ENCODE measurements at regions of chr4 and their contacts with region 1.

Region 1: DNA sequence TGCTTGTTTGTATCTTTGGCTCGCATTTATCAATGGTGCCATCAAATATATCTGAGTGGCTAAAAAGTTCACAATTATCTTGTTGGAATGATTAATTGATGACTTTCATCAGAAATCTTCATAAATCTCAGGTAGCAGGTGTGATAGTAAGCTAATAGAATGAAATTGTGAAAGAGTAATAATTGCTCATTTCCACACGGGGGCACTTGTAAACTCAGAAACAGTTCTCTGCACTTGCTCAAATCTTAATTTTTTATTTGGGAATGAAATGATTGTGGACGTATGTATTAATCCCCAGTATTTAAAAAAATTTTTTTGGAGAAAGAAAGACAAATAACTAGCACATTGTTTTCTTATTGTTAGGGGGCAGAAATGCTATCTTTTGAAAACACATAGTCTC is 132.8 kb downstream of the DTHD1 start:
- DNase-seq: peak in 1 of 9 donors; percentile 4
- ATAC-seq: no peak
- H3K4me3 ChIP-seq: no peak overlapping the region
- H3K4me3 Mint-ChIP-seq: no peak overlapping the region
- H3K27ac ChIP-seq: no peak overlapping the region
- H3K27ac Mint-ChIP-seq: no peak overlapping the region
- H3K4me1 ChIP-seq: no peaks in the 10 kb centered on the region
- H3K4me1 Mint-ChIP-seq: no peaks in the 10 kb centered on the region
- H3K27me3 ChIP-seq: peaks cover 0 to 4% of the 10 kb centered on the region in 2 donors
- H3K27me3 Mint-ChIP-seq: peaks cover 31 to 51% (median 40%) of the 10 kb centered on the region in 5 donors

Region 2: GRCh38 chr4:36427696-36428095 is 13.4 kb after region 1 on chr4:
- CTCF ChIA-PET with region 1: no interaction called
- POLR2A ChIA-PET with region 1: no interaction called
- intact Hi-C with region 1: no loop called
- DNase-seq: no peak
- ATAC-seq: no peak
- H3K4me3 ChIP-seq: no peak overlapping the region
- H3K4me3 Mint-ChIP-seq: no peak overlapping the region
- H3K27ac ChIP-seq: no peak overlapping the region
- H3K27ac Mint-ChIP-seq: no peak overlapping the region
- H3K4me1 ChIP-seq: no peaks in the 10 kb centered on the region
- H3K4me1 Mint-ChIP-seq: no peaks in the 10 kb centered on the region
- H3K27me3 ChIP-seq: no peaks in the 10 kb centered on the region
- H3K27me3 Mint-ChIP-seq: peaks cover 4 to 32% (median 12%) of the 10 kb centered on the region in 5 donors

Region 3: DNA sequence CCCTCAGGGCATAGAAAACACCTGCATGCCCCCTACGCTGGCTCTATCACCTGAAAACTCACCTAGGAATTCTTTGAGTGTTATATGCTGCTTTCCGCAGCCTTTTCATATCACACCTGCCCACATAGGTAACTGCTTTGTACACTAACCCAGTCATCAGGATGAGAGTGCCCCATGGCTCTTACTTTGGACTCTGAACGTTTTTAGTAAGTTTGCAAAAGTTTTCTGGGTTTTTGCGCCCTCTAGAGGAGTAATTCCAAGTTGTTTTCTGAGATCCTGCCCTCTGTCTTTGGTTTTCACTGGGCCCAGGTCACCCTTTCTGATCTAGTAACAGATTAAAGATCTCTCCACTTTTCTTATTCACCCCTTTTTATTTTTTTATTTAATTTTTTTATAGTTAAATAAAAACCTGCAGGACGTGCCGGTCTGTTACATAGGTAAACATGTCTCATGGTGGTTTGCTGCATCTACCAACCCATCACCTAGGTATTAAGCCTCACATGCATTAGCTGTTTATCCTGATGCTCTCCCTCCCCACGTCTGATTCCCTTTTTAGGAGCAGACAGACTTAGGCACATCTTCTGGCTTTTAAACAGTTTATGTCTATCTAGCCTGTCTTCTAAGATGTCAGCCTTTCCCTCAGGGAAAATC is 969.5 kb after region 1 on chr4:
- CTCF ChIA-PET with region 1: no interaction called
- POLR2A ChIA-PET with region 1: no interaction called
- intact Hi-C with region 1: loop called (anchors 1 to 2 kb)
- DNase-seq: peak in 5 of 9 donors; percentile 4 to 20 (median 10)
- ATAC-seq: peak; percentile 34
- H3K4me3 ChIP-seq: no peak overlapping the region
- H3K4me3 Mint-ChIP-seq: no peak overlapping the region
- H3K27ac ChIP-seq: no peak overlapping the region
- H3K27ac Mint-ChIP-seq: no peak overlapping the region
- H3K4me1 ChIP-seq: no peaks in the 10 kb centered on the region
- H3K4me1 Mint-ChIP-seq: no peaks in the 10 kb centered on the region
- H3K27me3 ChIP-seq: no peaks in the 10 kb centered on the region
- H3K27me3 Mint-ChIP-seq: peaks cover 0 to 13% (median 6%) of the 10 kb centered on the region in 5 donors

Region 4: GRCh38 chr4:37389967-37390580 is 975.8 kb after region 1 on chr4:
- CTCF ChIA-PET with region 1: no interaction called
- POLR2A ChIA-PET with region 1: no interaction called
- intact Hi-C with region 1: loop called (anchors 1 to 2 kb)
- DNase-seq: peak in 6 of 9 donors; percentile 14 to 33 (median 23)
- ATAC-seq: peak; percentile 68
- H3K4me3 ChIP-seq: no peak overlapping the region
- H3K4me3 Mint-ChIP-seq: no peak overlapping the region
- H3K27ac ChIP-seq: no peak overlapping the region
- H3K27ac Mint-ChIP-seq: no peak overlapping the region
- H3K4me1 ChIP-seq: no peaks in the 10 kb centered on the region
- H3K4me1 Mint-ChIP-seq: peaks cover 0 to 7% (median 0%) of the 10 kb centered on the region in 7 donors
- H3K27me3 ChIP-seq: no peaks in the 10 kb centered on the region
- H3K27me3 Mint-ChIP-seq: peaks cover 0 to 10% (median 7%) of the 10 kb centered on the region in 5 donors

Region 5: GRCh38 chr4:37793562-37793961 is 1379.3 kb after region 1 on chr4:
- CTCF ChIA-PET with region 1: no interaction called
- POLR2A ChIA-PET with region 1: no interaction called
- intact Hi-C with region 1: loop called in 1 of 2 experiments (anchors 5 kb)
- DNase-seq: peak in 5 of 9 donors; percentile 33 to 44 (median 39)
- ATAC-seq: peak; percentile 80
- H3K4me3 ChIP-seq: no peak overlapping the region
- H3K4me3 Mint-ChIP-seq: no peak overlapping the region
- H3K27ac ChIP-seq: no peak overlapping the region
- H3K27ac Mint-ChIP-seq: peak overlapping the region in 1 of 9 donors; percentile 49
- H3K4me1 ChIP-seq: no peaks in the 10 kb centered on the region
- H3K4me1 Mint-ChIP-seq: peaks cover 0 to 3% (median under 1%) of the 10 kb centered on the region in 7 donors
- H3K27me3 ChIP-seq: no peaks in the 10 kb centered on the region
- H3K27me3 Mint-ChIP-seq: peaks cover 0 to 22% (median 0%) of the 10 kb centered on the region in 5 donors

Measured in naive thymus-derived CD4-positive, alpha-beta T cell (primary cell).